Activated CD4-positive, alpha-beta memory T cell treated with anti-CD3 and anti-CD28 coated beads, Interleukin-2, amount 10 ng/mL, durations not matched to agents 7 days and 5 days (primary cell): ENCODE measurements at regions of chr11 and their contacts with region 1.

Region 1: GRCh38 chr11:4072668-4073285 is 21.8 kb upstream of the RRM1 start:
- DNase-seq: peak; percentile 51
- H3K4me3 Mint-ChIP-seq: no peak overlapping the region
- H3K27ac Mint-ChIP-seq: peak overlapping the region; percentile 5
- H3K4me1 Mint-ChIP-seq: peaks cover 33% of the 10 kb centered on the region
- H3K27me3 Mint-ChIP-seq: no peaks in the 10 kb centered on the region

Region 2: GRCh38 chr11:3807909-3808860 is 264.6 kb before region 1 on chr11 and contains the start of gene PGAP2:
- CTCF ChIA-PET with region 1: interaction called, 32 read pairs
- POLR2A ChIA-PET with region 1: interaction called, 4 read pairs
- DNase-seq: peak; percentile 65
- H3K4me3 Mint-ChIP-seq: peak within 1 kb of the TSS; percentile 85
- H3K27ac Mint-ChIP-seq: peak within 1 kb of the TSS; percentile 64
- H3K4me1 Mint-ChIP-seq: peaks cover 20% of the 10 kb centered on the region
- H3K27me3 Mint-ChIP-seq: no peaks in the 10 kb centered on the region
- total RNA-seq, gene PGAP2: 18.0 to 19.0 TPM

Region 3: GRCh38 chr11:3841426-3842350 is 231.1 kb before region 1 on chr11:
- CTCF ChIA-PET with region 1: interaction called, 554 read pairs
- POLR2A ChIA-PET with region 1: interaction called, 15 read pairs
- DNase-seq: peak; percentile 93
- H3K4me3 Mint-ChIP-seq: peak overlapping the region; percentile 90
- H3K27ac Mint-ChIP-seq: peak overlapping the region; percentile 96
- H3K4me1 Mint-ChIP-seq: peaks cover 44% of the 10 kb centered on the region
- H3K27me3 Mint-ChIP-seq: no peaks in the 10 kb centered on the region

Region 4: GRCh38 chr11:3905080-3905953 is 167.5 kb before region 1 on chr11:
- CTCF ChIA-PET with region 1: interaction called, 17 read pairs
- POLR2A ChIA-PET with region 1: interaction called, 3 read pairs
- DNase-seq: peak; percentile 70
- H3K4me3 Mint-ChIP-seq: no peak overlapping the region
- H3K27ac Mint-ChIP-seq: peak overlapping the region; percentile 54
- H3K4me1 Mint-ChIP-seq: peaks cover 68% of the 10 kb centered on the region
- H3K27me3 Mint-ChIP-seq: no peaks in the 10 kb centered on the region

Region 5: DNA sequence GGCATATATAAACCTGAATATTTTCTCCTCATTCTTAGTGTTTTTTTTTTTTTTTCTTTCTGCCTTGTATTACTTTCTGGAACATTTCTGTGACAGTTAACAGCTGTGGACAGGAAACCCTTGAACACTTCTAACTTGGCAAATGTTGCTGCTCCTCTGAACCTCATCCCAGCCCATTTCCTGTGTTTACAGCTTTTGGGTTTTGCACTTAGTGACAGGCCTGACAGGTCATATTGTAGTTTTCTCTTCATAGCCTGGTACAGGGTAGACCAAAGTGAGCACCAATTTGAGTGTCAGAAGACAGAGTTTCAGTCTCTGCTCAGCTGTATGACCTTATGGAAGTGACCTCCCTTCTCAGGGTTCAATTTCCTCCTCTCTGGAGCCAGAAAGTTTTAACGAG is 125.7 kb before region 1 on chr11:
- CTCF ChIA-PET with region 1: interaction called, 25 read pairs
- POLR2A ChIA-PET with region 1: interaction called, 3 read pairs
- DNase-seq: peak; percentile 72
- H3K4me3 Mint-ChIP-seq: peak overlapping the region; percentile 65
- H3K27ac Mint-ChIP-seq: peak overlapping the region; percentile 97
- H3K4me1 Mint-ChIP-seq: peaks cover 95% of the 10 kb centered on the region
- H3K27me3 Mint-ChIP-seq: no peaks in the 10 kb centered on the region

Region 6: DNA sequence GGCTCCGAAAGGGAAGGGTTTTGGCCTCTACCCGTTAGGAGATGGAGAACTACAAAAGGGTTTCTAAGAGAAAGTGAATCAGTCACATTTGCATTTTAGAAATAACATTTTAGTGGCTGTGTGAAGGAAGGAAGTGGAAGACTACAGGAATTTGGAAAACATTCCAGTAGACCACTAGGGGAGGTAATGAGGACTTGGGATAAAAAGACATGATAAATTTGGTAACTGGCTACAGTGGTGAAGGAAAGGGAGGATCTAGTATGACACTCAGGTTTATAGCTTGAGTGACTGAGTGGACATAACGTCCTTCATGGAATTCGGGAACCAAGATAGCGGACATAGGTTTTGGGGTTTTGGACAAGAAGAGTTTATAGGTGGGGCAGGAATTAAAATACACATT is 14.8 kb after region 1 on chr11:
- CTCF ChIA-PET with region 1: interaction called, 24 read pairs
- POLR2A ChIA-PET with region 1: interaction called, 7 read pairs
- DNase-seq: no peak
- H3K4me3 Mint-ChIP-seq: no peak overlapping the region
- H3K27ac Mint-ChIP-seq: peak overlapping the region; percentile 64
- H3K4me1 Mint-ChIP-seq: peaks cover 64% of the 10 kb centered on the region
- H3K27me3 Mint-ChIP-seq: no peaks in the 10 kb centered on the region

Region 7: DNA sequence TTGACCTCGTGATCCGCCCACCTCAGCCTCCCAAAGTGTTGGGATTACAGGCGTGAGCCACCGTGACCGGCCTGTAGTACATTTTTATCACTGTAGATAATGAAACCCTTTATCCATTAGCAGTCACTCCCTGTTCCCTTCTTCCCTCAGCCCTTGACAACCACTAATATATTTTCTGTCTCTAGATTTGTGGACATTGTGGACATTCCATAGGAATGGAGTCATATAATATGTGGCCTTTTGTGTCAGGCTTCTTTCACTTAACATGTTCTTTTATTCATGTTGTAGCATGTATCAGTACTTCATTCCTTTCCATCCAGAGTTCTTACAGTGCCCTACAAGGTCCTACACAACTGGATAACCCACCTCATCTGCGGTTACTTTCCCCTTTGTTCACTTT is 52.4 kb after region 1 on chr11:
- CTCF ChIA-PET with region 1: no interaction called
- POLR2A ChIA-PET with region 1: no interaction called
- DNase-seq: no peak
- H3K4me3 Mint-ChIP-seq: no peak overlapping the region
- H3K27ac Mint-ChIP-seq: no peak overlapping the region
- H3K4me1 Mint-ChIP-seq: peaks cover 2% of the 10 kb centered on the region
- H3K27me3 Mint-ChIP-seq: no peaks in the 10 kb centered on the region